CD4-positive, alpha-beta T cell (primary cell): ENCODE measurements at regions of chr12 and their contacts with region 1.

Region 1: GRCh38 chr12:32252199-32253073 is 145.8 kb downstream of the BICD1 start:
- DNase-seq: no peak
- ATAC-seq: no peak
- H3K4me3 ChIP-seq: no peak overlapping the region
- H3K4me3 Mint-ChIP-seq: no peak overlapping the region
- H3K27ac ChIP-seq: no peak overlapping the region
- H3K27ac Mint-ChIP-seq: no peak overlapping the region
- H3K4me1 ChIP-seq: peaks cover 3% of the 10 kb centered on the region
- H3K4me1 Mint-ChIP-seq: peaks cover 7% of the 10 kb centered on the region
- H3K27me3 ChIP-seq: no peaks in the 10 kb centered on the region
- H3K27me3 Mint-ChIP-seq: no peaks in the 10 kb centered on the region
- CTCF ChIP-seq: no peak

Region 2: GRCh38 chr12:32290411-32290810 is 38.0 kb after region 1 on chr12:
- CTCF ChIA-PET with region 1: no interaction called
- POLR2A ChIA-PET with region 1: no interaction called
- intact Hi-C with region 1: loop called in 1 of 2 experiments (anchors 1 kb)
- DNase-seq: no peak
- ATAC-seq: no peak
- H3K4me3 ChIP-seq: no peak overlapping the region
- H3K4me3 Mint-ChIP-seq: no peak overlapping the region
- H3K27ac ChIP-seq: no peak overlapping the region
- H3K27ac Mint-ChIP-seq: no peak overlapping the region
- H3K4me1 ChIP-seq: no peaks in the 10 kb centered on the region
- H3K4me1 Mint-ChIP-seq: peaks cover 5% of the 10 kb centered on the region
- H3K27me3 ChIP-seq: no peaks in the 10 kb centered on the region
- H3K27me3 Mint-ChIP-seq: no peaks in the 10 kb centered on the region
- CTCF ChIP-seq: no peak

Region 3: GRCh38 chr12:32353540-32353939 is 101.1 kb after region 1 on chr12:
- CTCF ChIA-PET with region 1: no interaction called
- POLR2A ChIA-PET with region 1: no interaction called
- intact Hi-C with region 1: no loop called
- DNase-seq: no peak
- ATAC-seq: no peak
- H3K4me3 ChIP-seq: no peak overlapping the region
- H3K4me3 Mint-ChIP-seq: no peak overlapping the region
- H3K27ac ChIP-seq: no peak overlapping the region
- H3K27ac Mint-ChIP-seq: no peak overlapping the region
- H3K4me1 ChIP-seq: no peaks in the 10 kb centered on the region
- H3K4me1 Mint-ChIP-seq: no peaks in the 10 kb centered on the region
- H3K27me3 ChIP-seq: no peaks in the 10 kb centered on the region
- H3K27me3 Mint-ChIP-seq: no peaks in the 10 kb centered on the region
- CTCF ChIP-seq: no peak